Left lung (tissue), 14 donors: ENCODE measurements at regions of chr4 and their contacts with region 1.

Region 1: DNA sequence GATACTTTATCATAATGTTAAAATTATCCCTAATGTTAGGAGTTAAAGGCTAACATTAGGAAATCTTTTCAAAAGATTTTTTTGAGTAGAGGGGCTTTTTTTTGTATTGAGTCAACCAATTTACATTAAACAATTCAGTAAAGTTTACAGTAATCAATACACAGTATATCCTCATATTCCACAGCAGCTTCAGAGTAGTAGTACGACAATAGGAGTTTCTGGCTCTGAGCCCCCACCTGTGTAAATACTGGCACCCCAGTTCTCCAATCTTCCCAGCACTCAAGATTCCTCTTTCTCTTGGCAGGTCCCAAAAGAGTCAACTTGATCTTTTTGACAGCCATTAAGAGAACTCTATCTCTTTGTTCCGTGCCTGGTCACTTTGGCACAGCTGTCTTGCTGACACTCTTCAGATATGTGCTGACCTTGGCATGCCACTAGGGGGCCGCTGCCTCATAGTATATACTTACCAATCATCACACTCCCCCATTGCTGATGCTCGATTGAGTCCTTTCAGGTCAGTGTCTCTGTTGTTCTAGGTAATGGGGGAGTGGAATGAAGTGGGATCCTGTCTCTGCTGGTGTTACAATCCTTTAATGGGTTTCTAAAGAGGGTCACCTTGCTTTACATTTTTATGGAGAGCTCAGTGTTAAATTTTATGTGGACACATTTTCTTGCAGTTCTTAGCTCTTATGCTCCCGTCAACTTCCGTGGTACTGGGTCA is 19.5 kb upstream of the CCNI start:
- DNase-seq: peak in 3 of 4 donors; percentile 50 to 87 (median 76)
- ATAC-seq: peak; percentile 96
- H3K4me3 ChIP-seq: no peak overlapping the region
- H3K27ac ChIP-seq: no peak overlapping the region
- H3K4me1 ChIP-seq: peaks cover 0 to 6% of the 10 kb centered on the region in 2 donors
- H3K27me3 ChIP-seq: no peaks in the 10 kb centered on the region
- CTCF ChIP-seq: peak; percentile 81 to 84

Region 2: GRCh38 chr4:76896731-76897535 is 198.3 kb before region 1 on chr4:
- intact Hi-C with region 1: no loop called
- DNase-seq: peak in 2 of 4 donors; percentile 42 to 84
- ATAC-seq: peak; percentile 61
- H3K4me3 ChIP-seq: peak overlapping the region; percentile 45 to 46
- H3K27ac ChIP-seq: peak overlapping the region; percentile 76 to 82
- H3K4me1 ChIP-seq: peaks cover 15 to 21% of the 10 kb centered on the region in 2 donors
- H3K27me3 ChIP-seq: peaks cover 13 to 61% of the 10 kb centered on the region in 2 donors
- CTCF ChIP-seq: no peak

Region 3: GRCh38 chr4:77156533-77156911 is 61.3 kb after region 1 on chr4:
- intact Hi-C with region 1: loop called in 1 of 2 experiments (anchors 10 kb)
- DNase-seq: peak; percentile 94 to 100 (median 98)
- ATAC-seq: peak; percentile 89
- H3K4me3 ChIP-seq: peak overlapping the region; percentile 97 to 99
- H3K27ac ChIP-seq: peak overlapping the region; percentile 94 to 95
- H3K4me1 ChIP-seq: peaks cover 8 to 24% of the 10 kb centered on the region in 2 donors
- H3K27me3 ChIP-seq: no peaks in the 10 kb centered on the region
- CTCF ChIP-seq: no peak

Region 4: DNA sequence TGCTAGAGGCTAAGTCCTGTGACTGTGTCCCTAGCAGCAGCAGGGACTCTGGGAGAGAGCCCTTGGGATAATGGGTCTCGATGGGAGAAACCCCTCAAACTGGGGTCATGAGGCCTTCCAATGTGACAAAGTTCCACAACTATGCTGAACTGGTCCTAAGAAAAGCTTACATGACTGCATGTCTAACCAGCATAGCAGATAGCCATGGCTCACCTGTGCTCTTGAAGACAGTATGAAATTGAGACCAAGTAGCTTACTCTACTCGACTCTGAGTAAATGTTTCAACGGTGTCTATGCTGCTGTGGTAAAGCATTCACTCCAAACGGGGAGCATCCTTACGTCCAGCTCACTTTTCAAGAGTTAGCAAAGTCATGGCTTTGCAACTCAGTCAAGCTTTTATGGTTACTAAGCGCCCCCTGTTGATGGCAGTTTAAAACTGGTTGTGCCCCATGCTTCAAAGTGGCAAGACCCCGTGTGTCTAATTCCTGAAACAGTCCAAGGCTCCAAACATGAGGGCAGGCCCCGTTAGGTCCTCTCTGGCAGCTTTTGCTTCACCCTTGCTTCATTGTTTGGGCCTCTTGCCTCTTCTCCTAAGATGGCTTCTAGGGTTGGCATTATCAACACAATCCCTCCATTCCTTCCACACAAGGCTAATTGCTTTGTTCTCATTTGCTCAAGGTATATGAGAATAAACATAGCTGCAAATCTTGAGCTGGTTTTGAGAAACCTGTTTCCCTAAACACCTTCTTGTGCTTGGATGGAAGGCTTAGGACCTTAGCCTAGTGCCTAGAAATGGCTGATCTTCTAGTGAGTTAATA is 108.3 kb after region 1 on chr4:
- intact Hi-C with region 1: loop called in 1 of 2 experiments (anchors 10 kb)
- DNase-seq: peak in 3 of 4 donors; percentile 35 to 84 (median 72)
- ATAC-seq: peak; percentile 87
- H3K4me3 ChIP-seq: no peak overlapping the region
- H3K27ac ChIP-seq: peak overlapping the region in 1 of 2 donors; percentile 2
- H3K4me1 ChIP-seq: peaks cover 0 to 4% of the 10 kb centered on the region in 2 donors
- H3K27me3 ChIP-seq: no peaks in the 10 kb centered on the region
- CTCF ChIP-seq: peak; percentile 71

Region 5: DNA sequence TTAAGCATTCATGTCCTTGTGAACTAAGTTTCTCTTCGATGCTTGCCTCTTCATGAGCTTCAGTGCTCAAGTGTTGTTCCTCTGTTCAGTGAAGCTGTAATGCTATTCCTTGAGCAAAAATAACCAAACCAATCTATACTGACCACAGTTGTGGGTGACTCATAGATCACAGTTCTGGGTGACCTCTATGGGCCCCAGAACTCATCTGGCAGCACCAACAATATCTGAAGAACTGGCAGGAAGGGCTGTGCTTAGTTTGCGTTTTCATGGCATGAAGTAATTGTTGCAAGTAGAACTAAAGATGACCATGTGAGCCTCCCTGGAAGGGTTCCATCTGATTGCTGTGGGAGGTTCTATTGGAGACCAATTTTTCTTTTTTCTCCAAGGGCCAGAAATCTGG is 168.0 kb after region 1 on chr4:
- intact Hi-C with region 1: no loop called
- DNase-seq: no peak
- ATAC-seq: no peak
- H3K4me3 ChIP-seq: no peak overlapping the region
- H3K27ac ChIP-seq: no peak overlapping the region
- H3K4me1 ChIP-seq: no peaks in the 10 kb centered on the region
- H3K27me3 ChIP-seq: no peaks in the 10 kb centered on the region
- CTCF ChIP-seq: no peak